CD4-positive, alpha-beta T cell (primary cell): ENCODE measurements at regions of chr3 and their contacts with region 1.

Region 1: DNA sequence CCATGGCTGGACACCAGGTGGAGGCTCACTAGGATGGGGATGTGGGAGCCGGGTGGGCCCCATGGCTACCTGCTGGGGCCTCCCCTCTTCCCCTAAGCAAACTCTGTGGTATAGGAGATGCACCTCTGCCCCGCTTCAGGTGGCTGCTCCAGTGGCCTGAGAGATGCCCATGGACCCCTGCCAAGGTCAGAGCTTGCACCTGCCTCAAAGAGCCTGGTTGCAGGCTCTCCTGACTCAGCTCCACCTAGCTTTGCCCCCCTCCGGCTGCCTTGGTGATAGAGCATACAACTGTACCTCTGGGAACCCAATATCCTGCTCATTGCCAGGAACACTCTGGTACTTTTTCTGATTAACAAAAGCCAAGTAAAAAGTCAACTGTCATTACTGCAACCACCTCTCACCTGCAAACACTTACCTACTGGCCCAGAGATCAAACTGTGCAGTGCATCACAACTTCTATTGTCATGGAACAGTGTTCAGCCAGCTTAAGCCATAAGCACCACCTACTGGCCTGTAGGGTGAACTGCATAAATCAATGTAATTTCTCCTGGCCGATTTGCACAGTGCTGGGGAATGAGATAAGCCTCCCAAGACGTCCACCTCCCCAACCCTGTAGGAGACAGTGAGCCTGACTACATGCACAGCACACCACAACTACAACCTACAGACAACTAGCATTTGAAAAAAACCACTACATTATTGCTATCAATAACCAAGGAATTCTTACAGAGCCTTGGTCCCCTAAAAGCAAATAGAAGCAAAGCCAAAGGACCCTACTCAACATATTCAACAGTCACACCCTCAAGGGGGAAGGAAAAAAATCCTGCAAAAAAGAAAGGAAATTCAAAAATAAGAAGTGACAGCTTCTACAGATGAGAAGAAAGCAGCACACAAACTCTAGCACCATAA is 352.4 kb upstream of the ARHGEF26 start:
- DNase-seq: peak; percentile 9 to 77 (median 34)
- ATAC-seq: peak; percentile 98
- H3K4me3 ChIP-seq: no peak overlapping the region
- H3K4me3 Mint-ChIP-seq: no peak overlapping the region
- H3K27ac ChIP-seq: no peak overlapping the region
- H3K27ac Mint-ChIP-seq: no peak overlapping the region
- H3K4me1 ChIP-seq: peaks cover 5% of the 10 kb centered on the region
- H3K4me1 Mint-ChIP-seq: no peaks in the 10 kb centered on the region
- H3K27me3 ChIP-seq: no peaks in the 10 kb centered on the region
- H3K27me3 Mint-ChIP-seq: peaks cover 9% of the 10 kb centered on the region
- CTCF ChIP-seq: peak; percentile 89

Region 2: DNA sequence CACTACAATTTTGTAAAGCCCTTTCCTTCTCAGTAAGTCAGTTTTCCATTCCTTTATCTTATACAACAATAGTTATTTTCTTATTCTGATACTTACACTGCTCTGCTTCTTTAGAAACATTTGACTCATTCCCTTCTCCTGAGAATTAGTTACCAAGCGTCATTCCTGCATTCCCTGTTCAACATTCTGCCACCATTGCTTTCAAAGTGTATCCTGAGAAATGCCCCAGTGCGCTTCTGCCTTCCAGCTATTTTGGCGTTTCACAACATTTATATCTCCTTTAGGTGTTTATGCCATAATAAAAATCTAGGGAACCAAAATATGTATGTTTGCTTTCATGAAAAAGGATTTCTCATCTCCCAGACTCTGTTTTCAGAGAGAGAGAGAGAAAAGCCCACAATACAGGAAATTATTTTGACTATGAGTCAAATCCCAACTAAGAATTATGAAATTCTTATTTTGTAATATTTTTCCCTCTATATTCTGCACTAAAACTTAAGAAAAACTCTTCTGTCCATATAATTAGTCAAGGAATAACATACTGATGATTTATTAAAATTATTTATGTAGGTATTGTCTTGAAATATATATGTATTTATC is 725.0 kb before region 1 on chr3:
- CTCF ChIA-PET with region 1: interaction called, 10 read pairs
- POLR2A ChIA-PET with region 1: no interaction called
- intact Hi-C with region 1: loop called (anchors 1 to 2 kb)
- DNase-seq: no peak
- ATAC-seq: no peak
- H3K4me3 ChIP-seq: no peak overlapping the region
- H3K4me3 Mint-ChIP-seq: no peak overlapping the region
- H3K27ac ChIP-seq: no peak overlapping the region
- H3K27ac Mint-ChIP-seq: no peak overlapping the region
- H3K4me1 ChIP-seq: no peaks in the 10 kb centered on the region
- H3K4me1 Mint-ChIP-seq: peaks cover 5% of the 10 kb centered on the region
- H3K27me3 ChIP-seq: no peaks in the 10 kb centered on the region
- H3K27me3 Mint-ChIP-seq: no peaks in the 10 kb centered on the region
- CTCF ChIP-seq: no peak

Region 3: DNA sequence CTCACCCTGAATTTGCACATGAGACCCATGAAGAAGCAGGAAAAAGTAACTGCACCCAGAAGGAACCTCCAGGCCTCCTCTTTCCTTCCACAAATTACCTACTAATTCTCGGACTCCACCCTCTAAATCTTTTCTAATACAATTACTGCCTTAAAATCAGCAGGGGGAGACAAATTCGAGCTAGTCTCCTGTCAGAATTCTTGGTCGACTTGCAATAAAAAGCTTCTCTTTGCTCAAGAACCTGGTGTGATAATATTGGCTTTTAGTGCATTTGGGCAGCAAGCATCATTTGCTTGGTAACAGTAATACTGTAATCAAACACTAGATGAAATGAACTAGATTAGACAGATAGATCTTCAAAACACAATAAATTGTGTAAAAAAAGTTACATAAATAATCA is 324.9 kb before region 1 on chr3:
- CTCF ChIA-PET with region 1: no interaction called
- POLR2A ChIA-PET with region 1: no interaction called
- intact Hi-C with region 1: loop called in 1 of 2 experiments (anchors 2 kb)
- DNase-seq: peak in 3 of 14 experiments; percentile 14 to 28 (median 18)
- ATAC-seq: no peak
- H3K4me3 ChIP-seq: no peak overlapping the region
- H3K4me3 Mint-ChIP-seq: no peak overlapping the region
- H3K27ac ChIP-seq: no peak overlapping the region
- H3K27ac Mint-ChIP-seq: no peak overlapping the region
- H3K4me1 ChIP-seq: no peaks in the 10 kb centered on the region
- H3K4me1 Mint-ChIP-seq: peaks cover 23% of the 10 kb centered on the region
- H3K27me3 ChIP-seq: no peaks in the 10 kb centered on the region
- H3K27me3 Mint-ChIP-seq: no peaks in the 10 kb centered on the region
- CTCF ChIP-seq: peak; percentile 23

Region 4: DNA sequence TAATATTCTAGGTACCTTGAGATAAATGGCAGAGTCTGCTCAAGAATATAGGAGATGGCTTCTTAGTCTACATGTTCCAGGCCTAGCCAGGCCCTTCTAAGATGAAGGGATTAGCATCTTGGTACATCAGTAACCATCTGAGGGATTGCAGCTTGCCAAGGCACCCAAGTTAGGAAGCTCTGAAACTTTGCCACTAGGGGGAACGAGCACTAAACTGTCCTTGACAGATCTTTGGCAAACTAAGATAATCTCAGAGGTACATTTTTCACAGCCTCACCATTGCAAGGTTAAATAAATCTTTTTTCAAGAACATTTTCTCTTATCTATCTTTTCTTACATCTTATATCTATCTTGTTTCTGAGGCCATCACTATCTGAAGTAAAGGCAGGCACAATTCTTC is 255.6 kb before region 1 on chr3:
- CTCF ChIA-PET with region 1: no interaction called
- POLR2A ChIA-PET with region 1: no interaction called
- intact Hi-C with region 1: loop called (anchors 5 to 10 kb)
- DNase-seq: peak in 5 of 14 experiments; percentile 2 to 49 (median 25)
- ATAC-seq: no peak
- H3K4me3 ChIP-seq: no peak overlapping the region
- H3K4me3 Mint-ChIP-seq: no peak overlapping the region
- H3K27ac ChIP-seq: no peak overlapping the region
- H3K27ac Mint-ChIP-seq: no peak overlapping the region
- H3K4me1 ChIP-seq: no peaks in the 10 kb centered on the region
- H3K4me1 Mint-ChIP-seq: no peaks in the 10 kb centered on the region
- H3K27me3 ChIP-seq: no peaks in the 10 kb centered on the region
- H3K27me3 Mint-ChIP-seq: no peaks in the 10 kb centered on the region
- CTCF ChIP-seq: peak; percentile 57